ENCODE measurements at regions of chr2 and their contacts with region 1.

Region 1: DNA sequence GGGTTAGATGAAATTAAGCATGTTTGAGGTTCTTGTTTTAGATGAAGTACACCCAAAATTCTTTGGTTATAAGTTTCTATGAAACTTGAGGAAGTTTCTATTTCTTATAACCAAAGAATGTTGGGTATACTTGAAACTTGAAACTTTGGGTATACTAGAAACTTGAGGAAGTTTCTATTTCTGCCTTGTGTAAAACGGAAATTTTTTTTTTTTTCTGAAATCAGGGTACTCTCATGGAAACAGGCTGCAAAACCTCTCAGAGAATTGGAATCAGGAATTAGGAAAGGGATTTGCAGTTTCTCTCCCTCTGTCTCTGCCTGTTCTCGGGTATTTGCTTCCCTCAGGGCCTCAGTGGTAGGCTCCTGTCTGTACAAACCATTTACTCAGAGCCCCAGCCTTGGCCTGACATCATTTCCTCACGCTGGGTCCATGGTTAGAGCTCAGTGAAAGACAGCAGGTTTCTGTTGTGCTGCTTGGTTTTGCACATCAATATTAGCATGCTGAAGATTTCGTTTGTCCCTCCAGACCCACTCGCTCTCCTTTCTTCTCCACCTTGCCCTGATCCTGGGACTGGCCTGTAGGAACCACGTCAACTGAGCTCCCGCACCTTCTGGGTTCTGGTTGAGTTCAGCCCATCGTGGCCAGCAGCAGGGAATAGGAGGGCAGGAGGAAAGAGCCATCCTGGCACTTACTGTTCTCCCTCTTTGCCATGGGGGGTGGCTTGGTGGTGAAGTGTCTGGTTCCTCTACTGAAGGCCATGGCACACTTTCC is 106.4 kb downstream of the POLR1A start:
- DNase-seq: no peak
- ATAC-seq: no peak
- H3K4me3 ChIP-seq: no peak overlapping the region
- H3K27ac ChIP-seq: peak overlapping the region; percentile 62 to 78 (median 70)
- H3K4me1 ChIP-seq: peaks cover 22 to 33% of the 10 kb centered on the region in 2 donors
- H3K27me3 ChIP-seq: no peaks in the 10 kb centered on the region
- CTCF ChIP-seq: no peak
- POLR2A ChIP-seq: no peak

Region 2: GRCh38 chr2:85765081-85765731 is 234.0 kb before region 1 on chr2:
- in situ Hi-C with region 1: no loop called
- intact Hi-C with region 1: no loop called
- DNase-seq: no peak
- ATAC-seq: no peak
- H3K4me3 ChIP-seq: no peak overlapping the region
- H3K27ac ChIP-seq: peak overlapping the region in 1 of 4 donors; percentile 21
- H3K4me1 ChIP-seq: peaks cover 60 to 85% of the 10 kb centered on the region in 2 donors
- H3K27me3 ChIP-seq: no peaks in the 10 kb centered on the region
- CTCF ChIP-seq: no peak
- POLR2A ChIP-seq: no peak

Region 3: GRCh38 chr2:85911814-85912692 is 87.2 kb before region 1 on chr2:
- in situ Hi-C with region 1: no loop called
- intact Hi-C with region 1: no loop called
- DNase-seq: peak in 1 of 2 donors; percentile 41
- ATAC-seq: peak; percentile 40 to 63
- H3K4me3 ChIP-seq: no peak overlapping the region
- H3K27ac ChIP-seq: peak overlapping the region; percentile 42 to 68 (median 56)
- H3K4me1 ChIP-seq: peaks cover 0 to 5% of the 10 kb centered on the region in 2 donors
- H3K27me3 ChIP-seq: no peaks in the 10 kb centered on the region
- CTCF ChIP-seq: no peak
- POLR2A ChIP-seq: no peak

Region 4: DNA sequence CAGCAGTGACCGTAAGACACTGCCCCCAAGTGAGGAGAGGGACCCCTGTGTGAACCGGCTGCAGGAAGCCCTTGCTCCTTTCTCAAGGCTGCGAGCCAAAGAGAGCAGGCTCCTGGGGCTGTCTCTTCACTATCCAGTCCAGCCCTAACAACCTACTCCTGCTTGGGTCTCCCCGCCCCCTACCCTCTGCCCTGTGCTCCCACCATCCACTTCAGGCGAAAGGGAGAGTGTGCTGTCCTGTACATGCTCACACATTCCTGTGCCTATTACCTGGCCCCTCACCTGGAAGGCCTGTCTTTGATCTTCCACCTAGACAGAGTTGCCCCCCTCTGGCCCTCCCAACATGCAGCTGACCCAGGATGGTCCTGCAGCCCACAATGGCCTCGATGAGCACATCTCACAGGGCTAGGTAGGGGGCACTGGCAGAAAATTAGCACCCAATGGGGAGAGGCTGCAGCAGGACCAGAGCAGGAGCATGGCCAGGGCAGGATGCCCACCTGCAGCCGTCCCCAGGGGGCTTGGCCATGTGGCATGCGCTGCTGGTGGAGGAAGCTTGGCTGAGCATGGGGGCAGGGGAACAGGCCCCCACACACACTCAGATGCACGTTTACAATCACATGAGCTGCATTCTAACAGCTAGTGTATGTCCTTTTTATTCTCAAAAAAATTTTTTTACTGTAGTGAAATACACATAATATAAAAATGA is 12.9 kb after region 1 on chr2:
- in situ Hi-C with region 1: no loop called
- intact Hi-C with region 1: loop called (anchors 2 kb)
- DNase-seq: no peak
- ATAC-seq: no peak
- H3K4me3 ChIP-seq: no peak overlapping the region
- H3K27ac ChIP-seq: peak overlapping the region in 1 of 4 donors; percentile 8
- H3K4me1 ChIP-seq: peaks cover 5 to 7% of the 10 kb centered on the region in 2 donors
- H3K27me3 ChIP-seq: no peaks in the 10 kb centered on the region
- CTCF ChIP-seq: no peak
- POLR2A ChIP-seq: no peak